HCT116 (cell line): ENCODE measurements at regions of chr2 and their contacts with region 1.

Region 1: DNA sequence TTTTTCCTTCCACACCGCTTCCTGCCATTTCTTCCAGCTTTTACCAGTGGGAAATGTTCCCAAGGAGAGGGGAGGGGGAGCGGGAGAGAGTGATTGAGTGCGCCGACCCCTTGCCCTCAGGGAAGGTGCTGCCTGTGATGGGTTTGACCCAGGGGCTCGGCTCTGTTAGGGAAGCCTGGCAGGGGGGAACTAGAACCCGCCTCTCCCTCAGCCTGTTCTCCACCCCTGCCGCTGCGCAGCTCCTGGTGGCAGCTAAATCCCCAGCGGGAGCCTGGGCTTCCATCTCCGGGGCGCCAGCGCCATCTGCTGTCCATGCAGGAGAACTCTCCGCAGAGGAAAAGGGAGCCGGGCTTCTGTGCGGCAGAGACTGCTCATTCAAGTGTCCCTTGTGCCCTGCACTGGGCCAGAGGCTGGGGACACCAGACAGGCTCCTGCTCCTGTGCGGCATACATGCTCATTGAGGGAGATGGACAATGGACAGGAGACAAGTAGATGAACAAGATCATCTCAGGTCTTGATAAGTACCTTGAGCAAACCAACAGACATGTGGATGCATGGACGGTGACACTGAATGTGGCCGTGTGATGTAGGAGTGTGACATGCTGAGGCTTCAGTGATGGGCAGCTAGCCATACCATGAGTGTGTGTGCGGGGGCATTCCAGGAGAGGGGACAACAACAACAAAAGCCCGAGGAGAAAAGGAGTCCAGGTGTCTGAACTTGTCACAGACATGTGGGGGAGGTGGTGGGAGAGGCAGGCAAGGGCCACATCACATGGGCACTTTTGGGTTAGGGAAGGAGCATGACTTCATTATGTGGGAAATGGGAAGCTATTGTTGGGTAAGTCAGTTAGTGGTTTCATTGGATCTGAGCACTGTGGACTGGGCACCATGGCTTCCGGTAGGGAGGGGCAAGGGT is 13.3 kb downstream of the CHPF start:
- DNase-seq: peak; percentile 71
- ATAC-seq: peak; percentile 95
- H3K4me3 ChIP-seq: no peak overlapping the region
- H3K27ac ChIP-seq: no peak overlapping the region
- H3K4me1 ChIP-seq: peaks cover 13 to 38% of the 10 kb centered on the region in 2 experiments; a peak in 3 of 4 replicates
- H3K27me3 ChIP-seq: no peaks in the 10 kb centered on the region
- CTCF ChIP-seq: peak in 2 of 3 experiments; percentile 95 to 97; a peak in 4 of 6 replicates
- POLR2A ChIP-seq: no peak
- RAD21 ChIP-seq: no peak

Region 2: GRCh38 chr2:219388127-219388844 is 142.0 kb before region 1 on chr2:
- CTCF ChIA-PET with region 1: interaction called, 32 read pairs
- POLR2A ChIA-PET with region 1: interaction called, 4 read pairs
- RAD21 ChIA-PET with region 1: interaction called in 1 of 2 experiments, 4 read pairs
- intact Hi-C with region 1: no loop called
- DNase-seq: peak; percentile 90
- ATAC-seq: peak; percentile 78
- H3K4me3 ChIP-seq: peak overlapping the region; percentile 31 to 49
- H3K27ac ChIP-seq: peak overlapping the region; percentile 63
- H3K4me1 ChIP-seq: peaks cover 9 to 18% of the 10 kb centered on the region in 2 experiments; a peak in 3 of 4 replicates
- H3K27me3 ChIP-seq: no peaks in the 10 kb centered on the region
- CTCF ChIP-seq: peak; percentile 38 to 64 (median 60); a peak in 4 of 6 replicates
- POLR2A ChIP-seq: no peak
- RAD21 ChIP-seq: no peak

Region 3: GRCh38 chr2:219430633-219431615 is 99.4 kb before region 1 on chr2:
- CTCF ChIA-PET with region 1: interaction called, 13 read pairs
- POLR2A ChIA-PET with region 1: no interaction called
- RAD21 ChIA-PET with region 1: interaction called, 3 to 6 read pairs
- intact Hi-C with region 1: no loop called
- DNase-seq: no peak
- ATAC-seq: peak; percentile 85
- H3K4me3 ChIP-seq: no peak overlapping the region
- H3K27ac ChIP-seq: no peak overlapping the region
- H3K4me1 ChIP-seq: peaks cover 6 to 32% of the 10 kb centered on the region in 2 experiments
- H3K27me3 ChIP-seq: no peaks in the 10 kb centered on the region
- CTCF ChIP-seq: peak; percentile 10 to 53 (median 29); a peak in 2 of 6 replicates
- POLR2A ChIP-seq: no peak
- RAD21 ChIP-seq: peak; percentile 72

Region 4: GRCh38 chr2:219475697-219476651 is 54.3 kb before region 1 on chr2:
- CTCF ChIA-PET with region 1: interaction called, 25 read pairs
- POLR2A ChIA-PET with region 1: no interaction called
- RAD21 ChIA-PET with region 1: interaction called, 3 read pairs
- intact Hi-C with region 1: loop called (anchors 1 kb)
- DNase-seq: no peak
- ATAC-seq: peak; percentile 91
- H3K4me3 ChIP-seq: no peak overlapping the region
- H3K27ac ChIP-seq: no peak overlapping the region
- H3K4me1 ChIP-seq: peaks cover 3 to 15% of the 10 kb centered on the region in 2 experiments; a peak in 3 of 4 replicates
- H3K27me3 ChIP-seq: no peaks in the 10 kb centered on the region
- CTCF ChIP-seq: peak; percentile 88 to 96 (median 94)
- POLR2A ChIP-seq: no peak
- RAD21 ChIP-seq: peak; percentile 89

Region 5: DNA sequence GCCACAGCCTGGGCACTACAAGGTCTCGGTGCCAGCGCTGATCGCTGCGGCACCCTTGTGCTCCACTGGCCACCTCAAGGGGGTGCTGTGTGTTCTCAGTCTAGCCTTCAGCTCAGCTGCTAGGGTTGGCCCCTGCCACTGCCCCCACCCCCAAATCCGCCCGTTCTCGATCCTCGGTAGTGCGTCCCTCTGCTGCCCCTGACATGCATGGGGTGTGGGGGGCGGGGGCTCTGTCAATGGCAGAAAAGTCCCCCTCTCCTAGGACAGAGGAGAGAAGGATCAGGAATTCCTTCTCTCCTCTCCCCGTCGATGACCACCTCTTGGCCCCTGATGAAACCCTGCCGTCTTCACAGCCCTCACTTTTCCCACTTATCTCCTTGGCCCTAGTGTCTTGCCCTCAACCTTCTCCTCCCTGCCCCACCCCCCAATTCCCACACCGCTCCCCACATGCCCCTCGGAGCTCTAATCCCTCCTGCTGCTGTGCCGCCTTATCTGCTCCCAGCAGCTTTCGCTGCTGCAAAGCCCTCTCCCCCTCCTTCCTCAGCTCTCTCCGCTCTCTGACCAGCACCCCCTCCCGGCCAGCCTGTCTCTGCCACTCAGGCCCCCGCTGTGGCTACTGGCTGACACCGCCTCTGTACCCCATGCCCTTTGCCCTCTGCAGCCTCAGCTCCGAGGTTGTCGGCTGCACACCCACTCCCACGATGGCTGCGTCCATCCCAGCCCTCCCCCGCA is 20.4 kb before region 1 on chr2:
- CTCF ChIA-PET with region 1: interaction called, 31 read pairs
- POLR2A ChIA-PET with region 1: interaction called, 3 read pairs
- RAD21 ChIA-PET with region 1: interaction called, 10 read pairs
- intact Hi-C with region 1: no loop called
- DNase-seq: no peak
- ATAC-seq: peak; percentile 90
- H3K4me3 ChIP-seq: 0 out of 4 replicates have a peak overlapping the region, but pooled peaks of 1 of the 2 experiments have one; percentile 2
- H3K27ac ChIP-seq: no peak overlapping the region
- H3K4me1 ChIP-seq: peaks cover 0 to 19% of the 10 kb centered on the region in 2 experiments; a peak in 2 of 4 replicates
- H3K27me3 ChIP-seq: no peaks in the 10 kb centered on the region
- CTCF ChIP-seq: peak; percentile 59 to 91 (median 80); a peak in 5 of 6 replicates
- POLR2A ChIP-seq: no peak
- RAD21 ChIP-seq: peak; percentile 70